Lower leg skin (tissue), 4 donors: ENCODE measurements at regions of chr1 and their contacts with region 1.

Region 1: GRCh38 chr1:151934048-151934493 is 24.8 kb upstream of the THEM4 start:
- DNase-seq: peak in 1 of 2 donors; percentile 42
- H3K4me3 ChIP-seq: no peak overlapping the region
- CTCF ChIP-seq: peak in 1 of 3 donors; percentile 54
- POLR2A ChIP-seq: no peak

Region 2: DNA sequence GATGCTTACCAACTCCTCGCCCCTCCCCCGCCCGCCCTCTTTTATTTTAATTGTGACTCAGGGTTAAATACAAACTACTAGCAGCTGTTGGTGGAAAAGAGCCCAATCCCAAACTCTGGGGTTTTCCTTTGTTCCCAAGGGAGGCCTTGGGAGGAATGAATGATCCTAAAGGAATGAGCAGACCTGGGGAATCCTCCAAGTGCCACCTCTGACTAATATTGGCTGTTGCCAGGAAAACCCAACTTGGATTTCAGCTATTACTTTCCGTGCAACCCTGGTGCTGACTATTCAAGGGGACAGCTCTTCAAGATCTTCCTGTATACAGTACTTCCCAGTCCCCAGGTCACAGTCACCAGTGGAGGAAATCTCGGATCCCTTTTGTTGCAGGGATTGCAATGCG is 60.9 kb after region 1 on chr1:
- intact Hi-C with region 1: loop called (anchors 5 kb)
- DNase-seq: peak in 1 of 2 donors; percentile 43
- H3K4me3 ChIP-seq: no peak overlapping the region
- CTCF ChIP-seq: no peak
- POLR2A ChIP-seq: no peak